ENCODE measurements at regions of chr1 and their contacts with region 1.

Region 1: GRCh38 chr1:58515794-58516401 is 30.6 kb downstream of the OMA1 start:
- DNase-seq: peak in 4 of 5 donors; percentile 12 to 51 (median 46)
- H3K4me3 ChIP-seq: no peak overlapping the region
- H3K4me3 Mint-ChIP-seq: no peak overlapping the region
- H3K27ac ChIP-seq: no peak overlapping the region
- H3K27ac Mint-ChIP-seq: peak overlapping the region in 7 of 8 donors; percentile 6 to 84 (median 70)
- H3K4me1 ChIP-seq: no peaks in the 10 kb centered on the region
- H3K4me1 Mint-ChIP-seq: peaks cover 4 to 9% (median 8%) of the 10 kb centered on the region in 3 donors
- H3K27me3 ChIP-seq: no peaks in the 10 kb centered on the region
- H3K27me3 Mint-ChIP-seq: no peaks in the 10 kb centered on the region

Region 2: GRCh38 chr1:58432851-58433668 is 82.8 kb before region 1 on chr1:
- CTCF ChIA-PET with region 1: no interaction called
- POLR2A ChIA-PET with region 1: no interaction called
- DNase-seq: no peak
- H3K4me3 ChIP-seq: no peak overlapping the region
- H3K4me3 Mint-ChIP-seq: no peak overlapping the region
- H3K27ac ChIP-seq: no peak overlapping the region
- H3K27ac Mint-ChIP-seq: no peak overlapping the region
- H3K4me1 ChIP-seq: no peaks in the 10 kb centered on the region
- H3K4me1 Mint-ChIP-seq: no peaks in the 10 kb centered on the region
- H3K27me3 ChIP-seq: no peaks in the 10 kb centered on the region
- H3K27me3 Mint-ChIP-seq: no peaks in the 10 kb centered on the region

Region 3: GRCh38 chr1:58497499-58497898 is 18.4 kb before region 1 on chr1:
- CTCF ChIA-PET with region 1: no interaction called
- POLR2A ChIA-PET with region 1: no interaction called
- DNase-seq: no peak
- H3K4me3 ChIP-seq: no peak overlapping the region
- H3K4me3 Mint-ChIP-seq: no peak overlapping the region
- H3K27ac ChIP-seq: no peak overlapping the region
- H3K27ac Mint-ChIP-seq: no peak overlapping the region
- H3K4me1 ChIP-seq: no peaks in the 10 kb centered on the region
- H3K4me1 Mint-ChIP-seq: peaks cover 7 to 15% (median 15%) of the 10 kb centered on the region in 3 donors
- H3K27me3 ChIP-seq: no peaks in the 10 kb centered on the region
- H3K27me3 Mint-ChIP-seq: no peaks in the 10 kb centered on the region

Region 4: DNA sequence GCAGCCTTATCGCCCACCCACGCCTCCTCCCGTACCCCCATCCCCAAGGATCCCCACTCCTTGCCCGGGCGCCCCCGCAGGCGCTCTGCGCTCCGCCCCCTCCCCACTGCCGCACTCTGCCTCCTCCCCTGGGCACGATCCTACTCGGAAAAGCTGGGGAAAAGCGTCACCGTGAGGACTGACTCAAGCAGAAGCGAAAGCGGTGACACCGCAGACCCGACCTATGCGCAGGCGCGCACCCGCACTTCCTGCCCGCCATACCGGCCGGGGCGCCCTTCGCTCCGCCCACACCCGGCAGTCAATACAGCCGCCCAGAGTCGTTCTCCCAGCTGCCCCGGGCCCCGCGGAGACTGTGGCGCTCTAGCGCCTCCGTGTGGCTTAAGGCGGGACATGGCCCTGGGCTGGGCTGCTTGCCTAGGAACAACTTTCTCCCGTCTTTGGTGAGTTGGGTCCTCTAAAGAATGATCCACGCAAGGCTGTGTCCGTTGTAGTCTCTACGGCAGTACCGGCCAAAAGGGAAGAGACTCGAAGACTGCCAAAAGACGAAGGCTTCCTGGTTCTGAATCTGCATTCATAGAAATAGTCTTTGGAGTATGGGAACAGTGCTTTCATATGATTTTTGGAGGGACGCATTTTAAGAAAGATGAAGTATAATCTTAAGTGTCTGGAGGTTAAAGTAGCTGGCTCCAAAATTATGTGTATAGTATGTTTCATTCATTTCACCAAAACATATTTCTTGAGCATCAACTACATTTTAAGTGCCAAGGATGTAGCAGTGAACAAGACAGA is 30.8 kb after region 1 on chr1 and contains the start of gene OMA1:
- CTCF ChIA-PET with region 1: interaction called, 38 read pairs
- POLR2A ChIA-PET with region 1: interaction called, 5 read pairs
- DNase-seq: peak; percentile 96 to 98 (median 97)
- H3K4me3 ChIP-seq: peak within 1 kb of the TSS; percentile 59
- H3K4me3 Mint-ChIP-seq: peak within 1 kb of the TSS; percentile 91 to 97 (median 94)
- H3K27ac ChIP-seq: peak within 1 kb of the TSS; percentile 92
- H3K27ac Mint-ChIP-seq: peak within 1 kb of the TSS; percentile 74 to 99 (median 98)
- H3K4me1 ChIP-seq: peaks cover 12% of the 10 kb centered on the region
- H3K4me1 Mint-ChIP-seq: peaks cover 23 to 40% (median 34%) of the 10 kb centered on the region in 3 donors
- H3K27me3 ChIP-seq: no peaks in the 10 kb centered on the region
- H3K27me3 Mint-ChIP-seq: peaks cover 0 to 1% of the 10 kb centered on the region in 2 donors
- total RNA-seq, gene OMA1: 15.9 to 17.6 TPM

Region 5: DNA sequence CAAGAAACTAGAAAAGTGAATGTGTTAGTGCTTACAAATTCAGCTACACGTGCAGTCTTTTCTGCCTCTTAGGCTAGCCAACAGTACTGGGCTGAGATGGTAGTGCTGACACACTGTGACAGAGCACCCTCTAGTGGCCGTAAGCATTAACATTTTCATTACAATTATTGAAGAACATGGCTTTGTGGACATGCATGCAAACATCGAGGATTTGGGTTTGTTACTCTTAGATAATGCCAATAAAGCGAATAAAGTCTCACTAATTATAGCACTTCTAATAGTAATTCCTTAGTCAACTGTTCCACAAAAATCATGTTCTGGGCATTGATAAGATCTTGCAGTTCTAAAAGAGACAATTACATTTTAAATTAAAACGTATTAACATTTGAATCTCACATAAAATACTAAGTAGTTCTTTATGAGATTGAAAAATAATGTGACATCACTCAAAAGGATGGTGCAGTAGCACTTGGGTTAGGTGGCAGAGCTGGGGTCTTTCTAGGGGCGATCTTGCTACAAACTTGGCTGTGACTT is 136.8 kb after region 1 on chr1:
- CTCF ChIA-PET with region 1: interaction called, 21 read pairs
- POLR2A ChIA-PET with region 1: no interaction called
- DNase-seq: peak; percentile 30 to 60 (median 41)
- H3K4me3 ChIP-seq: no peak overlapping the region
- H3K4me3 Mint-ChIP-seq: no peak overlapping the region
- H3K27ac ChIP-seq: no peak overlapping the region
- H3K27ac Mint-ChIP-seq: peak overlapping the region in 3 of 8 donors; percentile 20 to 48 (median 22)
- H3K4me1 ChIP-seq: peaks cover 9% of the 10 kb centered on the region
- H3K4me1 Mint-ChIP-seq: peaks cover 14 to 18% (median 17%) of the 10 kb centered on the region in 3 donors
- H3K27me3 ChIP-seq: no peaks in the 10 kb centered on the region
- H3K27me3 Mint-ChIP-seq: no peaks in the 10 kb centered on the region

Region 6: DNA sequence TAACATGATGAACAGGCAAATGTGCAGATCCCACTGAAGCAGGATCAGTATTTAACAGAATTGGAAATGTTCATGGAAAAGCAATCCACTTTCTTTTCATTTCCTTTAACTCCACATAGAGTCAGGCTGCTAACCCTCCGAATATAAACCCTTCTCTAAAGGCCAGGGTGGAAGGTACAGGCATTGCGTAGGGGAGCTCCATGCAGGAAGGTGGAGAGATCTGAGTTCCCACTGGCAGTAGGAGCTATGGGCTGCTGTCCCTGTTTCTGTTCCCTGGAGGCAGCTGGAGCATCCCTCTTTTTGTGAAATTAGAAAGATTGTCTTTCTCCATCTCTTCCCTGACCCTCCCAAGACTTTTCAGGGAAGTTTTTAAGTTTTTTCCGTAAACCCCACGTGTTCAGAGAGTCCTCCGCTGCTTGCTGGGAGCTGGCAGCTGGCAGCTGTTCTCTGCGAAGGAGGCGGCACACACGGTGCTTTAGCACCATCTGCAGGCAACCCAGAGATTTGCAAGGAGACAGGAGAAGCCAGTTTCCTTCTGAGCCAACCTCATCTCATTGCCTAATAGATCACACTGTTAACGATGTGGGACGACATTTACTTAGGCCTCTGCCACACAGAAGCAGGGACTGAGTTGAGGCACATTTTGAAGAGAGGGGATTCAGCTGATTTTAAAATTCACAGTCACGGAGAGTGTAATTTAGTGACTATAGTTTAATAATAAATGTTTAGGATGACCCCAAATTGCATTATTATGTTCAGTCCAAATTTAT is 1243.4 kb after region 1 on chr1:
- CTCF ChIA-PET with region 1: interaction called, 12 read pairs
- POLR2A ChIA-PET with region 1: no interaction called
- DNase-seq: peak; percentile 45 to 74 (median 57)
- H3K4me3 ChIP-seq: no peak overlapping the region
- H3K4me3 Mint-ChIP-seq: peak overlapping the region in 3 of 7 donors; percentile 25 to 55 (median 40)
- H3K27ac ChIP-seq: no peak overlapping the region
- H3K27ac Mint-ChIP-seq: peak overlapping the region in 2 of 8 donors; percentile 45 to 53
- H3K4me1 ChIP-seq: no peaks in the 10 kb centered on the region
- H3K4me1 Mint-ChIP-seq: peaks cover 4 to 5% (median 4%) of the 10 kb centered on the region in 3 donors
- H3K27me3 ChIP-seq: no peaks in the 10 kb centered on the region
- H3K27me3 Mint-ChIP-seq: no peaks in the 10 kb centered on the region